ENCODE measurements at regions of chr11 and their contacts with region 1.

Region 1: GRCh38 chr11:119759324-119759723 is 30.3 kb upstream of the NECTIN1 start:
- DNase-seq: no peak
- H3K4me3 ChIP-seq: no peak overlapping the region
- H3K27ac ChIP-seq: no peak overlapping the region
- H3K4me1 ChIP-seq: peaks cover 0 to 3% (median under 1%) of the 10 kb centered on the region in 4 experiments; a peak in 4 of 7 replicates
- H3K27me3 ChIP-seq: peaks cover 0 to 4% (median 0%) of the 10 kb centered on the region in 4 experiments; a peak in 2 of 7 replicates
- CTCF ChIP-seq: no peak
- EP300 ChIP-seq: no peak
- POLR2A ChIP-seq: no peak
- RAD21 ChIP-seq: no peak

Region 2: DNA sequence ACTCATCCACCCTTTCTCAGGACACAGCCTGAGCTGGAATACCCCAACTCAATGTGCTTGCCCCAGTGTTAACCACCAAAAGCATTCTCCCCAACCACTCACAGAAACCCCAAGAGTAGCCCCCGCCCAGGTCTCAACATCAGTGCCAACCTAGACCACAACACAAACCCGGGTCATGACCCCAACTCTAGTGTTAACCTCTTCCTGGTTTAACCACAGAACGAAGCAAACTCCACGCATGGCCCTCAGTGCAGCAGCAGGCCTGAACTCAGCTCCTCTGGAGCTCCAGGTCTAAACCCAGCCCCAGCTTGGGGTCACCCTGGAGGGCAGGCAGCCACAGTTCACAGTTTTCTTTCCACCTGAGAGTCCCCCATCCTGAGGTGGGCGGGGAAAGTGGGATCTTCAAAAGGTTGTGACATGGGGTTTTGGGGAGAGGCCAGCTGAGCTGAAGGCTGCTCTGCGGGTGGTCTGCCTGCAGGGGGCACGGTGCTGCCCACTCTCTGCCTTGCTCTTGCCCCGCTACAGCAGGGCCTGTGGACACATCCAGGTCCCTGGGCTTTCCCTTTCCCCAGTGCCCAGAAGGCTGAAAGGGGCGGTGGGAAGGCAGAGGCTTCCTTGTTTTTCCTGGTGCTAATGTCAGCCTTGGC is 68.2 kb before region 1 on chr11:
- CTCF ChIA-PET with region 1: no interaction called
- POLR2A ChIA-PET with region 1: no interaction called
- DNase-seq: no peak
- H3K4me3 ChIP-seq: no peak overlapping the region
- H3K27ac ChIP-seq: no peak overlapping the region
- H3K4me1 ChIP-seq: peaks cover 16 to 74% (median 51%) of the 10 kb centered on the region in 4 experiments
- H3K27me3 ChIP-seq: no peaks in the 10 kb centered on the region
- CTCF ChIP-seq: peak in 1 of 3 experiments; percentile 4; a peak in 1 of 4 replicates
- EP300 ChIP-seq: no peak
- POLR2A ChIP-seq: no peak
- RAD21 ChIP-seq: no peak

Region 3: DNA sequence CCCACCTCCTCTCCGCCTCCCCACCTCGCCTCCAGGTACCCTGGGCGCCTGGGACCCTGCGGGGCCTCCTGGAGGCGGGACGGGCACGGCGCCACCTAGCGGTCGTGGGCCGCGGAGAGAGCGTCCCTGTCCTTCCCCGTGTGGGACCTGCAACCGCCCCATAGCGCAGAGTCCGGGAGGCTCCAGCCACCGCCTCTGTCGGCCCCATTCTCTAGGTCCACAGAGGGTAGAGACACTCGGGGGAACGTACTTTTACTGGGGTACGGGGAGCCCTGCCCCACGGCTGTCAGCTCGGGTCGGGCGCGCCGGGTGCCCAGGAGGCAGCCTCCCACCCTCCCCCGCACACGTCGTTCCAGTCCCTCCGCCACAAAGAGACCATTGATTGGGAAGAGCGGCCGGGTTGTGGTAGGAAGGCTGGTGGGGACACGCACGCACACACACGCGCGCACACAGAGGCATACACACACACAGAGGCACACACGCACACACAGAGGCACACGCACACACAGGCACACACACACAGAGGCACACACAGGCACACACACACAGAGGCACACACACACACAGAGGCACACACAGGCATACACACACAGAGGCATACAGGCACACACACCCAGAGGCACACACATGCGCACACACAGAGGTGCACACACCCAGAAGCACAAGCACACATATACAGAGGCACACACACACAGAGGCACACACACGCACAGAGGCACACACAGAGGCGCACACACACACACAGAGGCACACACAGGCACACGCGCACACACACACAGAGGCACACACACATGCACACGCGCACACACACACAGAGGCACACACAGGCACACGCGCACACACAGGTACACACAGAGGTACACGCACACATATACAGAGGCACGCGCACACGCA is 17.7 kb before region 1 on chr11:
- CTCF ChIA-PET with region 1: interaction called, 5 read pairs
- POLR2A ChIA-PET with region 1: interaction called, 10 read pairs
- DNase-seq: peak in 1 of 2 experiments; percentile 95
- H3K4me3 ChIP-seq: peak overlapping the region; percentile 11 to 67 (median 34); a peak in 6 of 8 replicates
- H3K27ac ChIP-seq: no peak overlapping the region
- H3K4me1 ChIP-seq: peaks cover 4 to 12% (median 10%) of the 10 kb centered on the region in 4 experiments
- H3K27me3 ChIP-seq: peaks cover 0 to 22% (median 13%) of the 10 kb centered on the region in 4 experiments; a peak in 6 of 7 replicates
- CTCF ChIP-seq: peak; percentile 85 to 91 (median 89)
- EP300 ChIP-seq: no peak
- POLR2A ChIP-seq: no peak
- RAD21 ChIP-seq: peak; percentile 53 to 74

Region 4: DNA sequence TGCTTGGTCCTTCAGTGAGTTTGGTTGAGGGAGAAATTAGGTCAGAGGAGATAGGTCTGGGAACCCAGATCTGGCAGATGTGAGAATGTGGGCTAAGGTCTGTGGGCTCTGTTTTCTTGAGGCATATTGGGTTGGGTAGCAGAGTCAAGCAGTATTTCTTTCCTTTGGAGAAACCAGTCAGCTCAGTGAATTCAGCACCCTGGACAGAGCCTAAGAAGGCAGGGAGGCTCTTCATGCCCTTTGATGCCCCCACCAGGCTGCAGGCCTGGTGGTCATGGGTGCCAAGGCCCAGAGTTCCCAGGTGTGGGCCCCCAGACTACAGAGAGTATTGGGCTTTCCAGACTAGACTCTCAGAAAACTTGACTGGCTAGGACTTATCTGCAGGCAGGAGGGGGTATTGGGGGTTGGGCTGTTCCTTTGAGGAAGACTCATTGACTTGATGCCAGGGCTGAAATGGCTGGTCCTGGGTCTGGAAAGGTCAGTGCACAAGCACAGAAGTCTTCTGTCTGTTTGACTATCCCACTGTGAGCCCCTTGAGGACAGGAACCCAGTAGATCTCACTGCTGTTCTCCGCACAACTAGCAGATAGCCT is 14.9 kb after region 1 on chr11:
- CTCF ChIA-PET with region 1: interaction called, 12 read pairs
- POLR2A ChIA-PET with region 1: no interaction called
- DNase-seq: no peak
- H3K4me3 ChIP-seq: no peak overlapping the region
- H3K27ac ChIP-seq: no peak overlapping the region
- H3K4me1 ChIP-seq: no peaks in the 10 kb centered on the region; a peak in 1 of 7 replicates
- H3K27me3 ChIP-seq: peaks cover 0 to 3% (median 0%) of the 10 kb centered on the region in 4 experiments; a peak in 1 of 7 replicates
- CTCF ChIP-seq: no peak
- EP300 ChIP-seq: no peak
- POLR2A ChIP-seq: no peak
- RAD21 ChIP-seq: peak in 1 of 2 experiments; percentile 37; a peak in 1 of 4 replicates

Region 5: DNA sequence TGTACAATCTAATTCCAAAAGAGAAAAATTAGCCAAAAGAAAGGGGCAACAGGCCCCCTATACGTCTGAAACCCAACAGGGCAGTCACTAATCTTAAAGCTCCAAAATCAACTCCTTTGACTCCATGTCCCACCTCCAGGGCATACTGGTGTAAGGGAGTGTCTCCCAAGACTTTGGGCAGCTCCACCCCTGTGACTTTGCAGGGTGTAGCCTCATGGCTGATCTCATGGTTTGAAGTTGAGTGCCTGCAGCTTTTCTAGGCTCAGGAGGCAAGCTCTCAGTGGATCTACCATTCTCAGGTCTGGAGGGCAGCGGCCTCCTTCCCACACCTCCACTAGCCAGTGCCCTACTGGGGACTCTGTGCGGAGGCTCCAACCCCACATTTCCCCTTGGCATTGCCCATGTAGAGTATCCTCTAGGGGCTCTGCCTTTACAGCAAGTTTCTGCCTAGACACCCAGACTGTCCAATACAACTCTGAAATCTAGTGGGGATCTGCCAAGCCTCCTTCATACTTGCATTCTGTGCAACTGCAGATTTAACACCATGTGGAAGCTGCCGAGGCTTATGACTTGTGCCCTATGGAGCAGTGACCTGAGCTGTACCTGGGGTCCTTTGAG is 284.1 kb after region 1 on chr11:
- CTCF ChIA-PET with region 1: no interaction called
- POLR2A ChIA-PET with region 1: no interaction called
- DNase-seq: peak in 1 of 2 experiments; percentile 37
- H3K4me3 ChIP-seq: no peak overlapping the region
- H3K27ac ChIP-seq: no peak overlapping the region
- H3K4me1 ChIP-seq: peaks cover 0 to 4% (median 3%) of the 10 kb centered on the region in 4 experiments; a peak in 3 of 7 replicates
- H3K27me3 ChIP-seq: no peaks in the 10 kb centered on the region; a peak in 2 of 7 replicates
- CTCF ChIP-seq: no peak
- EP300 ChIP-seq: no peak
- POLR2A ChIP-seq: no peak
- RAD21 ChIP-seq: no peak

Measured in H1 (cell line).